CD14-positive monocyte (primary cell): ENCODE measurements at regions of chr12 and their contacts with region 1.

Region 1: GRCh38 chr12:96120359-96121100 is 73.6 kb upstream of the ELK3 start:
- DNase-seq: peak; percentile 64 to 74 (median 74)
- H3K4me3 ChIP-seq: peak overlapping the region in 1 of 3 experiments; percentile 67
- H3K4me3 Mint-ChIP-seq: peak overlapping the region; percentile 65 to 68
- H3K27ac ChIP-seq: peak overlapping the region; percentile 72 to 93
- H3K27ac Mint-ChIP-seq: peak overlapping the region; percentile 93 to 99 (median 97)
- H3K4me1 ChIP-seq: peaks cover 20 to 27% of the 10 kb centered on the region in 2 donors
- H3K4me1 Mint-ChIP-seq: peaks cover 33% of the 10 kb centered on the region
- H3K27me3 ChIP-seq: no peaks in the 10 kb centered on the region
- H3K27me3 Mint-ChIP-seq: peaks cover 0 to 1% (median 0%) of the 10 kb centered on the region in 3 donors
- CTCF ChIP-seq: peak; percentile 39

Region 2: GRCh38 chr12:95996034-95996658 is 124.4 kb before region 1 on chr12 and contains the start of gene HAL:
- intact Hi-C with region 1: no loop called
- DNase-seq: peak; percentile 79 to 92 (median 87)
- H3K4me3 ChIP-seq: peak within 1 kb of the TSS; percentile 36 to 80 (median 52)
- H3K4me3 Mint-ChIP-seq: peak within 1 kb of the TSS; percentile 70 to 91
- H3K27ac ChIP-seq: peak within 1 kb of the TSS; percentile 76 to 90
- H3K27ac Mint-ChIP-seq: peak within 1 kb of the TSS; percentile 88 to 97 (median 94)
- H3K4me1 ChIP-seq: peaks cover 49 to 57% of the 10 kb centered on the region in 2 donors
- H3K4me1 Mint-ChIP-seq: peaks cover 63% of the 10 kb centered on the region
- H3K27me3 ChIP-seq: no peaks in the 10 kb centered on the region
- H3K27me3 Mint-ChIP-seq: peaks cover 0 to 2% (median 0%) of the 10 kb centered on the region in 3 donors
- CTCF ChIP-seq: no peak
- polyA plus RNA-seq, gene HAL: 28.0 to 42.0 (median 29.2) TPM

Region 3: GRCh38 chr12:96035278-96036236 is 85.0 kb before region 1 on chr12 and contains the start of gene LTA4H:
- intact Hi-C with region 1: no loop called
- DNase-seq: peak; percentile 95 to 96 (median 96)
- H3K4me3 ChIP-seq: peak within 1 kb of the TSS; percentile 77 to 99 (median 98)
- H3K4me3 Mint-ChIP-seq: no peak within 1 kb of the TSS
- H3K27ac ChIP-seq: peak within 1 kb of the TSS; percentile 73 to 87
- H3K27ac Mint-ChIP-seq: no peak within 1 kb of the TSS
- H3K4me1 ChIP-seq: peaks cover 60 to 84% of the 10 kb centered on the region in 2 donors
- H3K4me1 Mint-ChIP-seq: peaks cover 34% of the 10 kb centered on the region
- H3K27me3 ChIP-seq: no peaks in the 10 kb centered on the region
- H3K27me3 Mint-ChIP-seq: no peaks in the 10 kb centered on the region
- CTCF ChIP-seq: no peak
- polyA plus RNA-seq, gene LTA4H: 278 to 963 (median 647) TPM

Region 4: DNA sequence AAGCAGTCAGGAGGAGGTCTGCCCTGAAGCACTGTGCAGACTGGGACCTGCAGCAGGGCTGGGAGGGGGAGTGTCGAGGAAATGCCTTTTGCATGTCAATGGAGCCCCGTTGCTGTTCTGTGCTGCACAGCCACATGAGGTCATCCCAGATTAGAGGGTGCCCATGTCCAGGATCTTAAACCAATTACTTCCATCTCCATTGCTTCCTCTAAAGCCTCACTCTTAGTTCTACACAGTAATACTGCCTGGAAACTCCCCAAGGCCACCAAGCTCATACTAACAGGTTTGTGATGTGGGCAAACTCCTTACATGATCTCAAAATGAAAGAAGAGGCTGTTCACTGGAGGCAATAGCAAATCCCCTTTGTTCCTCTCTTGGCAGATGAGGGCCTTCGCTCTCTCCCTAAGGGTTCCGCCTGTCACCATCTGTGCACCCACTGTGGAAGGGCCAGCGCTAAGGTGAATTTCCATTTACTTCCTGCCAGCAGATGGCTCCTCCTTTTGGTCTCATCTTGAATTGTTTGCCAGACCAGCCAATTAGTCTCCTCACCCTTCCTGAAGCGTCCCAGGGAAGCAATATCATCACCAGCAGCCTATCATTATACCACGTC is 49.8 kb before region 1 on chr12:
- intact Hi-C with region 1: no loop called
- DNase-seq: no peak
- H3K4me3 ChIP-seq: no peak overlapping the region
- H3K4me3 Mint-ChIP-seq: no peak overlapping the region
- H3K27ac ChIP-seq: no peak overlapping the region
- H3K27ac Mint-ChIP-seq: peak overlapping the region in 1 of 7 donors; percentile 58
- H3K4me1 ChIP-seq: peaks cover 20 to 25% of the 10 kb centered on the region in 2 donors
- H3K4me1 Mint-ChIP-seq: peaks cover 33% of the 10 kb centered on the region
- H3K27me3 ChIP-seq: no peaks in the 10 kb centered on the region
- H3K27me3 Mint-ChIP-seq: peaks cover 0 to 1% (median 0%) of the 10 kb centered on the region in 3 donors
- CTCF ChIP-seq: no peak

Region 5: DNA sequence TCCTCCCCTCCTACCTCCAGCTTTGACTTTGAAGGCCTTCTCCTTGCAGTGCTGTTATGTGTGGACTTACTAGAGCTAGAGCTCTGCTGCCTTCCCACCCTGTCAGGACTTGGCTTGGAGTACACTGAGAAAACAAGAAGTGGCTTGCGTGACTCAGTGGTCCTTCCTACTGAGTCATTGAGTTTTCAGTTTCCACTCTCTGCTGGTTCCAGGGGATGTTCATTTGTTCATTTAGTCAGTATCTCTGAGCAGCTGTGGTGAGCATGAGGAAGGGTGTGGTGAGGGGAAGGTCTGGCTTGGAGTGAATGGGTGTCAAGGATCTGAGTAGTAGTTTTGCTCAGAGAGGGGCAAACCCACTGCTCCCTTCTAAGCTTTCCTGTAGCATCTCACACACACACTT is 56.5 kb after region 1 on chr12:
- intact Hi-C with region 1: no loop called
- DNase-seq: peak; percentile 93 to 98 (median 96)
- H3K4me3 ChIP-seq: no peak overlapping the region
- H3K4me3 Mint-ChIP-seq: peak overlapping the region in 1 of 2 donors; percentile 30
- H3K27ac ChIP-seq: peak overlapping the region; percentile 55 to 83
- H3K27ac Mint-ChIP-seq: peak overlapping the region; percentile 80 to 95 (median 93)
- H3K4me1 ChIP-seq: peaks cover 22 to 32% of the 10 kb centered on the region in 2 donors
- H3K4me1 Mint-ChIP-seq: peaks cover 36% of the 10 kb centered on the region
- H3K27me3 ChIP-seq: no peaks in the 10 kb centered on the region
- H3K27me3 Mint-ChIP-seq: peaks cover 0 to 5% (median 2%) of the 10 kb centered on the region in 3 donors
- CTCF ChIP-seq: no peak

Region 6: DNA sequence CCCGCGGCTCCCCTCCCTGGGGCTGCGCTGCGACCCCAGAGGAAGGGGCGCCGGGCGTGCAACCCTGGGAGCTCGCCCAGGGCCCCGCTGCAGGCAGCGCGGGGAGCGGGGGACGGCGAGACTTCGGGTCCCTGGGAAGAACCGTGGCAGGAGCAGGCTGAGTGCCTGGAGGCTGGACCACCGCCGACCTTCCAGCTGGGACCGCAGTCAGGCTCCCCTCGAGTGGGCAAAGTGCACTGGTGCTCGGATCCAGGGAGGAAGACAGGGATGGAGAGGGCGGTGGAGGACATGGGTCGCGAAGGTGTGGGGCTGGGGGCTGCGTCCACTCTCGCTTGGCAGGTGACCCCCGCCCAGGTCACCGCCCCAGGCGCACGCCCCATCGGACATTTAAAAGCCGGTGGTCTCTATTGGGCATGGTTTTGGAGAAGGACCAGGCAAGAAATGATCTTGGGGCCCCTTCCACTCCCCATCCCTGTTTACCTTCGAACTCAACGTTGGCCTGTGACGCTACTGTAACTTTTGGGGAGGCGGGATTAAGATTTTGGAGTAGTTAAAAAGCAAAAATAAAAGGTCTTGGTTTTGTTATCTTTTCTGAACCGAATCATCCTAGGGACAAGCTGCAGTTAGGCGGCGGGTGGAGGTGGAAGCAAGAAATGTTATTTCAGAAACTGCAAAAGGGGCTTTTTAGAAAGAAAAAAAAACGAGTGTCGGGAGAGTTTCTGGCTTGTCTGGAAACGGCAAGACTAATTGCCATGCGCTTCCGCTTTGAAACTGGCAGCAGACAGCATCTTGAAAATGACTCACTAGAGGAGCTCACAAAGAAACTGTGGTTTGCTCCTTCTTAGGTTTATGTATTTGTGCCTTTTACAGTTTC is 74.7 kb after region 1 on chr12:
- intact Hi-C with region 1: loop called (anchors 5 to 10 kb)
- DNase-seq: peak; percentile 87 to 97 (median 93)
- H3K4me3 ChIP-seq: peak overlapping the region; percentile 67 to 96 (median 82)
- H3K4me3 Mint-ChIP-seq: peak overlapping the region; percentile 90 to 97
- H3K27ac ChIP-seq: peak overlapping the region; percentile 78 to 100
- H3K27ac Mint-ChIP-seq: peak overlapping the region; percentile 94 to 99 (median 98)
- H3K4me1 ChIP-seq: peaks cover 24 to 39% of the 10 kb centered on the region in 2 donors
- H3K4me1 Mint-ChIP-seq: peaks cover 41% of the 10 kb centered on the region
- H3K27me3 ChIP-seq: no peaks in the 10 kb centered on the region
- H3K27me3 Mint-ChIP-seq: peaks cover 0 to 2% (median 0%) of the 10 kb centered on the region in 3 donors
- CTCF ChIP-seq: no peak

Region 7: GRCh38 chr12:96219698-96220206 is 99.2 kb after region 1 on chr12:
- intact Hi-C with region 1: loop called in 1 of 2 experiments (anchors 5 kb)
- DNase-seq: no peak
- H3K4me3 ChIP-seq: no peak overlapping the region
- H3K4me3 Mint-ChIP-seq: no peak overlapping the region
- H3K27ac ChIP-seq: no peak overlapping the region
- H3K27ac Mint-ChIP-seq: peak overlapping the region in 6 of 7 donors; percentile 10 to 82 (median 72)
- H3K4me1 ChIP-seq: peaks cover 8 to 10% of the 10 kb centered on the region in 2 donors
- H3K4me1 Mint-ChIP-seq: peaks cover 9% of the 10 kb centered on the region
- H3K27me3 ChIP-seq: no peaks in the 10 kb centered on the region
- H3K27me3 Mint-ChIP-seq: peaks cover 0 to 2% (median 0%) of the 10 kb centered on the region in 3 donors
- CTCF ChIP-seq: no peak